Endothelial cell of umbilical vein (primary cell): ENCODE measurements at regions of chr17 and their contacts with region 1.

Region 1: GRCh38 chr17:58710936-58711775 is 18.8 kb downstream of the RAD51C start:
- DNase-seq: peak; percentile 73
- H3K4me3 ChIP-seq: no peak overlapping the region
- H3K27ac ChIP-seq: no peak overlapping the region
- H3K4me1 ChIP-seq: no peaks in the 10 kb centered on the region
- H3K27me3 ChIP-seq: no peaks in the 10 kb centered on the region
- CTCF ChIP-seq: peak; percentile 47 to 52
- POLR2A ChIP-seq: no peak

Region 2: GRCh38 chr17:58452521-58453137 is 258.5 kb before region 1 on chr17:
- CTCF ChIA-PET with region 1: no interaction called
- POLR2A ChIA-PET with region 1: no interaction called
- dilution Hi-C with region 1: no loop called
- intact Hi-C with region 1: no loop called
- DNase-seq: no peak
- H3K4me3 ChIP-seq: no peak overlapping the region
- H3K27ac ChIP-seq: no peak overlapping the region
- H3K4me1 ChIP-seq: no peaks in the 10 kb centered on the region
- H3K27me3 ChIP-seq: no peaks in the 10 kb centered on the region
- CTCF ChIP-seq: no peak
- POLR2A ChIP-seq: no peak

Region 3: DNA sequence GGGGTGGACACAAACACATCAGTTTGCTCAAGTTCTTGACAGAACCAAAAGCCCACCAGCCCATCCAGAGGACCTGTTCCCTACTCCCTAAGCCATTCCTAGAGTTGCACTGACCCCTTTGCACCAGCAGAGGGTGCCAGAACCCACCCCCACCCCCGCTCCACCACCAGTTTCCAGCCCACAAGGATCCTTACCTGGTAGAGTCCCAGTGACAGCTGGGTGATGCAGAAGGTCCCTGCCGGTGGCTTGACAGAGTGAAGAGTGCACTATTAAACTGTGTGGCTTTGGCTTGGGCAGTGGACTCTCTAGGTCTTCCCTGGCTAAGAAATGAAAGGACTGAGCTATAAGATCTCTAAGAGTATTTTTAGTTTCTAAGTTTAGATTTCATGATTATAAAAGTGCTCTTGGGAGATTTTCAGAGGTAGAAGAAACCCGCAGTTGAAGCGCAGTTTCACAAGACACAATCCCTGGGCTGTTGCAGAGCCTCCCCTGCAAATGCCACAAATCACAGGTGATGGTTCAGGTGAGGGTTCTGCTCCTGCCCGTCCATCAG is 123.4 kb before region 1 on chr17:
- CTCF ChIA-PET with region 1: interaction called, 14 read pairs
- POLR2A ChIA-PET with region 1: no interaction called
- dilution Hi-C with region 1: no loop called
- intact Hi-C with region 1: loop called (anchors 2 kb)
- DNase-seq: peak; percentile 68
- H3K4me3 ChIP-seq: no peak overlapping the region
- H3K27ac ChIP-seq: no peak overlapping the region
- H3K4me1 ChIP-seq: no peaks in the 10 kb centered on the region
- H3K27me3 ChIP-seq: peaks cover 3 to 7% of the 10 kb centered on the region in 2 experiments
- CTCF ChIP-seq: peak; percentile 92 to 95
- POLR2A ChIP-seq: no peak

Region 4: DNA sequence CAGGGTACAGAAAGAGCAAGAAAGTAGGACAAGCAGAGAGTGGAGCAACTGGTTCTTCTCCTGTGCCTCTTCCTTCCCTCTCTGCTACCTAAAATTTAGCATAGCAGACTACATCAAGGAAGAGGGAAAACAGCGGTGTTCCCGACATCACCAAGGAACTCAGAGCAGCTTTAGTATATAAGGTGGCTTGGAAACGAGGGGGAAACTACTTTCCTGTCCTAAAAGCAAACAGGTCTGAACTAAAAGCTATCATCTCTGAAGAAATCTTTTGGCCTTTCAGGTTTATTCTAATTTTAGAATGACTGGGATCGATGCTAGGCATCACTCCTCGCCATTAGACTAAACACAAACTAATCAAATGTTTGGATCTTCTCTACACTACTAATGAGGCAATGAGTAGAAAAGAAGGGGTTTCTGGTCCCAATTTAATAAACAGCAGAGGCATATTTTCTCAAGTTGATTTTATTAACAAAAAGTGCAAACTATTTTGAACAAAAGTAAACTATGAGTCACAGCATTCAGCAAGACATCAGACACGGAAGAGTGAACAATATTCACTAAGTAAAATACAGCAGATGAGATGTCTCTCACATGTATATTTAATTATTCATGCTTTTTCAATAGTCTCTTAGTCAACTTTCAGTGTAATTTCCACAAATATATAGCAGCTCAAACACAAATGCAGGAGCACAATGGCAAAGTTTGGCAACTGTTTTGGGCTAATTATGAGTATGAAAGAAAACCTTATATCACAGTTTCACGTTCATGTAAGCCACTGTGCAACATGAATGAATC is 286.8 kb after region 1 on chr17:
- CTCF ChIA-PET with region 1: interaction called, 38 read pairs
- POLR2A ChIA-PET with region 1: no interaction called
- dilution Hi-C with region 1: no loop called
- intact Hi-C with region 1: no loop called
- DNase-seq: no peak
- H3K4me3 ChIP-seq: no peak overlapping the region
- H3K27ac ChIP-seq: no peak overlapping the region
- H3K4me1 ChIP-seq: peaks cover 25% of the 10 kb centered on the region
- H3K27me3 ChIP-seq: no peaks in the 10 kb centered on the region
- CTCF ChIP-seq: no peak
- POLR2A ChIP-seq: no peak

Region 5: DNA sequence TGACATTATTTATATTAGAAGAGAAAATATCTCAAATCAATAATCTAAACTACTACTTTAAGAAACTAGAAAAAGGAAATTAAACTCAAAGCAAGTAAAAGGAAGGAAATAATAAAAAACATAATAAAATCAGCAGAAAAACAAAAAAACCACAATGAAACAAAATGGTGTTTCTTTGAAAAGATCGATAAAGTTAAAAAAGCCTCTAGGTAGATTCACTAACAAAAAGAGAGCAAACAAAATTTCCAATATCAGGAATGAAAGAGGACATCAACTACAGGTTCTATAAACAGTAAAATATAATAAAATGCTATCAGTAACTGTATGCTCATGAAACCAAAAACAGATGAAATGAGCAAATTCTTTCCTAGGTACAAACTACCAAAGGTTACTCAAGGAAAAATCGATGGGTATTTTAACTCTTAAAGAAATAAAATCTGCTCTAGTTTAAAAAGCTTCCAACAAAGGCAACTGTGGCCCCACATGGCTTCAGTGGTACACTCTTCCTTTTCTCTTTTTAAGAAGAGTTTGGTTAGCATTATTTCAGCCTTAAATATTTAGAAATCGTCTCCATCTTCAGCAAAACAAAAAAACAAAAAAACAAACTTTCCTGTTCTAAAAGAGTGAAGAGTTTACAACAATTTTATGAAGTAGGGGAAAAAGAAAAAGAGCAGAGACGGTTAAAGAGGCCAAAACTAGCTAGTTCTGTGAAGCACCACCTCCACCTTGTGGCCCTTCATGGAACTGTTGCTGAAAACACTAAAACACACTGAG is 293.4 kb after region 1 on chr17:
- CTCF ChIA-PET with region 1: interaction called, 98 read pairs
- POLR2A ChIA-PET with region 1: no interaction called
- dilution Hi-C with region 1: no loop called
- intact Hi-C with region 1: loop called (anchors 1 kb)
- DNase-seq: peak; percentile 74
- H3K4me3 ChIP-seq: no peak overlapping the region
- H3K27ac ChIP-seq: no peak overlapping the region
- H3K4me1 ChIP-seq: peaks cover 30% of the 10 kb centered on the region
- H3K27me3 ChIP-seq: no peaks in the 10 kb centered on the region
- CTCF ChIP-seq: peak; percentile 69 to 79
- POLR2A ChIP-seq: no peak

Region 6: DNA sequence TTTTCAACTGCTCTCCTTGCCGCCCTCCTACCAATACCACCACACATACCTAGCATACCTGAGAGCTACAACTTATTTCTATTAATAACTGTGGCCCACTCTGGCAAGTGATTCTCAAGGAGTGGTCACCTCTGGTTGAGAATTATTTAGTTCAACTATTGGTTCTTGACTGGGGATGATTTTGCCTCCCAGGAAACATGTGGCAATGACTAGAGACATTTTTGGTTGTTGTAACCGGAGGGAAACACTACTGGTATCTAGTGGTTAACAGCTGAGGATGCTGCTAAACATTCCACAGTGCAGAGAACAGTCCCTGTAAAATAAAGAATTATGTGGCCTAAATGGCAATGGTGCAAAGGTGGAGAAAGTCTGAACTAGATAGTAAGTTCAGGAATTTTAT is 298.9 kb after region 1 on chr17:
- CTCF ChIA-PET with region 1: interaction called, 98 read pairs
- POLR2A ChIA-PET with region 1: interaction called, 3 read pairs
- dilution Hi-C with region 1: no loop called
- intact Hi-C with region 1: loop called (anchors 1 kb)
- DNase-seq: no peak
- H3K4me3 ChIP-seq: no peak overlapping the region
- H3K27ac ChIP-seq: no peak overlapping the region
- H3K4me1 ChIP-seq: no peaks in the 10 kb centered on the region
- H3K27me3 ChIP-seq: no peaks in the 10 kb centered on the region
- CTCF ChIP-seq: no peak
- POLR2A ChIP-seq: no peak